GM12878 (cell line): ENCODE measurements at regions of chr2 and their contacts with region 1.

Region 1: GRCh38 chr2:202870431-202871299 is 901 bp downstream of the ICA1L start:
- DNase-seq: no peak
- ATAC-seq: peak; percentile 90
- H3K4me3 ChIP-seq: peak overlapping the region; percentile 81
- H3K27ac ChIP-seq: peak overlapping the region; percentile 67
- H3K4me1 ChIP-seq: no peaks in the 10 kb centered on the region
- H3K27me3 ChIP-seq: no peaks in the 10 kb centered on the region
- CTCF ChIP-seq: peak; percentile 71 to 75 (median 75)
- EP300 ChIP-seq: no peak
- POLR2A ChIP-seq: no peak
- RAD21 ChIP-seq: peak; percentile 74

Region 2: DNA sequence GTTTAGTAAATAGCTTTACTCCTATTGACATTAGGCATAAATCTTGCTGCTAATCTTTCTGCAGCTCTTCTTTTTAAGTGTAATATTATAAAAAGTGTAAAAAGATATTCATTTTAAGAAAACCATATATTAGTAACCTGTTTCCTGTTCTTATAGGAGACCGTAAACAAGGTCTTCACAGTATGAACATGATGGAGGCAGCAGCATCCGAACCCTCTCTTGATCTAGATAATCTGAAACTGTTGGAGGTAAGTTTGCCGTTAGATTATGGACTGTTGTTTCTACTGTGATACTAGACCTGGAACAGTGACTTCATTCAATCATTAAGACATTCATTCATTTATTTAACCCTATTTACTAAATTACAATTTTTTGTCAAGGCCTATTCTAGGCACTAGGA is 355.9 kb before region 1 on chr2:
- CTCF ChIA-PET with region 1: no interaction called
- POLR2A ChIA-PET with region 1: no interaction called
- RAD21 ChIA-PET with region 1: no interaction called
- SMC1A ChIA-PET with region 1: no interaction called
- in situ Hi-C with region 1: no loop called
- intact Hi-C with region 1: no loop called
- DNase-seq: no peak
- ATAC-seq: no peak
- H3K4me3 ChIP-seq: no peak overlapping the region
- H3K27ac ChIP-seq: no peak overlapping the region
- H3K4me1 ChIP-seq: no peaks in the 10 kb centered on the region
- H3K27me3 ChIP-seq: no peaks in the 10 kb centered on the region
- CTCF ChIP-seq: no peak
- EP300 ChIP-seq: no peak
- POLR2A ChIP-seq: no peak
- RAD21 ChIP-seq: no peak

Region 3: DNA sequence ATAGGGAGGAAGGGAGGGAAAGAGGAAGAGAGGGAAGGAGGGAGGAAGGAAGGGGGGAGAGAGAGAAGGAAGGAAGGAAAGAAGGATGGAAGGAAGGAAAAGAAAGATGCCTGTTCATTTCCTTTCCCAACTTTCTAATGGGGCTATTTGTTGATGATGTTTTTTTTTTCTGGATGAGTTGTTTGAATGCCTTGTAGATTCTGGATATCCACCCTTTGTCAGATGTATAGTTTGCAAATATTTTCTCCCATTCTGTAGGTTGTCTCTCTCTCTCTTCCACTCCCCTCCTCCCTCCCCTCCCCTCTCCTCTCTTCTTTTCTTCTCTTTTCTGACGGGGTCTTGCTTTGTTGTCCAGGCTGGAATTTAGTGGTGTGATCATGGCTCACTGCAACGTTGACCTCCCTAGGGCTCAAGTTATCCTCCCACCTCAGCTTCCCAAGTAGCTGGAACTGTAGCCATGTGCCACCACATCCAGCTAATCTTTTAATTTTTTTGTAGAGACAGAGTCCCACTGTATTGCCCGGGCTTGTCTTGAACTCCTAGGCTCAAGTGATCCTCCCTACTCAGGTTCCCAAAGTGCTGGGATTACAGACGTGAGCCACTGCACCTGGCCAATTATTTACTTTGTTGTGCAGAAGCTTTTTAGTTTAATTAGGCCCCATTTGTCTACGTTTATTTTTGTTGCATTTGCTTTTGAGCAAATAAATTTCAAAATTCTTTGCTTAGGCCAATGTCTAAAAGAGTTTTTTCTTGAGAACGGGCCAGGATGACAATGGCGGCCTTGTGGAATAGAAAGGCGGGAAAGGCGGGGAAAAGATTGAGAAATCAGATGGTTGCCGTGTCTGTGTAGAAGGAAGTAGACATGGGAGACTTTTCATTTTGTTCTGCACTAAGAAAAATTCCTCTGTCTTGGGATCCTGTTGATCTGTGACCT is 293.1 kb before region 1 on chr2:
- CTCF ChIA-PET with region 1: interaction called, 3 read pairs
- POLR2A ChIA-PET with region 1: no interaction called
- RAD21 ChIA-PET with region 1: interaction called, 3 read pairs
- SMC1A ChIA-PET with region 1: interaction called, 3 read pairs
- in situ Hi-C with region 1: loop called (anchors 5 kb)
- intact Hi-C with region 1: loop called (anchors 2 kb)
- DNase-seq: no peak
- ATAC-seq: no peak
- H3K4me3 ChIP-seq: no peak overlapping the region
- H3K27ac ChIP-seq: no peak overlapping the region
- H3K4me1 ChIP-seq: no peaks in the 10 kb centered on the region
- H3K27me3 ChIP-seq: no peaks in the 10 kb centered on the region
- CTCF ChIP-seq: no peak
- EP300 ChIP-seq: no peak
- POLR2A ChIP-seq: no peak
- RAD21 ChIP-seq: no peak

Region 4: GRCh38 chr2:202583709-202584219 is 286.9 kb before region 1 on chr2:
- CTCF ChIA-PET with region 1: interaction called, 52 read pairs
- POLR2A ChIA-PET with region 1: no interaction called
- RAD21 ChIA-PET with region 1: interaction called, 41 read pairs
- SMC1A ChIA-PET with region 1: interaction called, 31 read pairs
- in situ Hi-C with region 1: loop called (anchors 5 kb)
- intact Hi-C with region 1: loop called (anchors 1 kb)
- DNase-seq: no peak
- ATAC-seq: no peak
- H3K4me3 ChIP-seq: no peak overlapping the region
- H3K27ac ChIP-seq: no peak overlapping the region
- H3K4me1 ChIP-seq: peaks cover 2% of the 10 kb centered on the region; the same call in 1 of the 2 replicates
- H3K27me3 ChIP-seq: no peaks in the 10 kb centered on the region
- CTCF ChIP-seq: no peak
- EP300 ChIP-seq: no peak
- POLR2A ChIP-seq: no peak
- RAD21 ChIP-seq: no peak

Region 5: DNA sequence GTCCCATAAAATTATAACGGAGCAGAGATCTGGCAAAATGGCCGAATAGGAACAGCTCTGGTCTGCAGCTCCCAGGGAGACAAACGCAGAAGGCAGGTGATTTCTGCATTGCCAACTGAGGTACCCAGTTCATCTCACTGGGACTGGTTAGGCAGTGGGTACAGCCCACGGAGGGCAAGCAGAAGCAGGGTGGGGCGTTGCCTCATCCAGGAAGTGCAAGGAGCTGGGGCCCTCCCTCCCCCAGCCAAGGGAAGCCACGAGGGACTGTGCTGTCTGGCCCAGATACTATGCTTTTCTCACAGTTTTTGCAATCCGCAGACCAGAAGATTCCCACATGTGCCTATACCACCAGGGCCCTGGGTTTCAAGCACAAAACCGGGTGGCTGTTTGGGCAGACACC is 21.9 kb before region 1 on chr2:
- CTCF ChIA-PET with region 1: interaction called, 7 read pairs
- POLR2A ChIA-PET with region 1: no interaction called
- RAD21 ChIA-PET with region 1: interaction called, 14 read pairs
- SMC1A ChIA-PET with region 1: interaction called, 20 read pairs
- in situ Hi-C with region 1: no loop called
- intact Hi-C with region 1: no loop called
- DNase-seq: no peak
- ATAC-seq: peak; percentile 86
- H3K4me3 ChIP-seq: no peak overlapping the region
- H3K27ac ChIP-seq: no peak overlapping the region
- H3K4me1 ChIP-seq: peaks cover 11% of the 10 kb centered on the region
- H3K27me3 ChIP-seq: no peaks in the 10 kb centered on the region
- CTCF ChIP-seq: no peak
- EP300 ChIP-seq: no peak
- POLR2A ChIP-seq: no peak
- RAD21 ChIP-seq: no peak

Region 6: GRCh38 chr2:202911512-202912341 is 41.1 kb after region 1 on chr2 and contains the starts of genes CARF and WDR12:
- CTCF ChIA-PET with region 1: interaction called, 11 read pairs
- POLR2A ChIA-PET with region 1: interaction called, 10 read pairs
- RAD21 ChIA-PET with region 1: no interaction called
- SMC1A ChIA-PET with region 1: interaction called, 7 read pairs
- in situ Hi-C with region 1: no loop called
- intact Hi-C with region 1: no loop called
- DNase-seq: peak; percentile 82
- ATAC-seq: peak; percentile 88
- H3K4me3 ChIP-seq: peak within 1 kb of the TSS; percentile 95
- H3K27ac ChIP-seq: peak within 1 kb of the TSS; percentile 93
- H3K4me1 ChIP-seq: peaks cover 5% of the 10 kb centered on the region
- H3K27me3 ChIP-seq: no peaks in the 10 kb centered on the region
- CTCF ChIP-seq: no peak
- EP300 ChIP-seq: no peak
- POLR2A ChIP-seq: peak; percentile 80
- RAD21 ChIP-seq: no peak
- polyA plus RNA-seq, gene CARF: 1.8 to 2.8 TPM
- polyA plus RNA-seq, gene WDR12: 214 to 256 TPM

Region 7: DNA sequence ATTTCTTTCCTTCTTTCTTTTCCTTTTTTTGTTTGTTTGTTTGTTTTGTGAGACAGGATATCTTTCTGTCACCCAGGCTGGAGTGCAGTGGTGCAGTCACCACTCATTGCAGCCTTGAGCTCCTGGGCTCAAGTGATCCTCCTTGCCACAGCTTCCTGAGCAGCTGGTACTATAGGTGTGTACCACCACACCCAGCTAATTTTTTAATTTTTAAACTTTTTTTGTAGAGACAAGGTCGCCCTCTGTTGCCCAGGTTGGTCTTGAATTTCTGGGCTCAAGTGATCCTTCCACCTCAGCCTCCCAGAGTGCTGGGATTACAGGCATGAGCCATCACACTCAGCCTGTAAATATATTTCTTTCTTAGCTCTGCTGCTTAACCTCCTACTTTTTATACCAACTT is 284.7 kb after region 1 on chr2:
- CTCF ChIA-PET with region 1: no interaction called
- POLR2A ChIA-PET with region 1: no interaction called
- RAD21 ChIA-PET with region 1: interaction called, 3 read pairs
- SMC1A ChIA-PET with region 1: no interaction called
- in situ Hi-C with region 1: no loop called
- intact Hi-C with region 1: loop called (anchors 1 kb)
- DNase-seq: no peak
- ATAC-seq: peak; percentile 54
- H3K4me3 ChIP-seq: no peak overlapping the region
- H3K27ac ChIP-seq: no peak overlapping the region
- H3K4me1 ChIP-seq: no peaks in the 10 kb centered on the region
- H3K27me3 ChIP-seq: no peaks in the 10 kb centered on the region
- CTCF ChIP-seq: peak in 1 of 3 experiments; percentile 6; a peak in 1 of 6 replicates
- EP300 ChIP-seq: no peak
- POLR2A ChIP-seq: no peak
- RAD21 ChIP-seq: 0 out of 2 replicates have a peak, but pooled peaks have one; percentile 24